H1 (cell line): ENCODE measurements at regions of chr3 and their contacts with region 1.

Region 1: DNA sequence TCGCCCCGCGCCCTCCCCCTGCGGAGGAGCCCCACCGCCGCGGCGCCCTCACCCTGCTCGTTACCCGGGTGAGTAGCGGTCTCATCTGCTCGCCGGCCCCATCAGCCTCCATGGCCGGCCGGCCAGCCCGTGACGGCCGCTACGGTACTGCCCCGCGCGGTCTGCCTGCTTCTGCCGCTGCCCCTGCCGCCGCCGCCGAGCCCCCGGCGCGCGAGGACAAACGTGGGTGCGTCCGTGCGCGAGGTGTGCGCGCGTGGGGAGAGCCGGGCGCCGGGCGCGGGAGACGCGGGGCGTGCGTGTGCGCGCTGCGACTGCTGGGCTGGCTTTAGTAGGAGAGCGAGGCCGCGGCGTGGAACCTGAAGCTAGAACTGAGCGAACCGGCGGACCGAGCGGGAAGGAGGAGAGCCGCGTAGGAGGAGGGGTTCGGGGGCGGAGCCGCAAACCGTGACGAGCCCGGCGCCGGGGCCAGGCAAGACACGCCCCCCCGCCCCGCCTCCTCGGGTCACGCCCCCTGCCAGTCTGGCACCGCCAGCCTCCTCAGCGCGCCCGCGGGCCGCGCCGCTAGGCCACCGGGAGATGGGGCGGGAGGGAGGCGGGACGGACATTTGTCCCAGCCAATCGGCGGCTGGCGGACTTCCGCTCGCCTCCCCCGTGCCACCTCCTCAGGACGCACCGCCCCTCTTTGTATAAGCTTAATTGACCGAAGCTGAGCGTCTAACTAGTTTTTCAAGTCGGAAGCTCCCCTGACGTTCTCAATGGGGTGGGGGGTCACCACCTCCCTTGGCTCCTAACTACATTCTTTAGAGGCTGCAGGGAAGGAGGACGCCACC is at the start of gene SLC4A7:
- DNase-seq: peak; percentile 91 to 99
- H3K4me3 ChIP-seq: peak within 1 kb of the TSS; percentile 79 to 91 (median 88)
- H3K27ac ChIP-seq: peak within 1 kb of the TSS; percentile 75
- H3K4me1 ChIP-seq: no peaks in the 10 kb centered on the region; a peak in 1 of 7 replicates
- H3K27me3 ChIP-seq: no peaks in the 10 kb centered on the region
- CTCF ChIP-seq: peak in 1 of 3 experiments; percentile 7; a peak in 1 of 4 replicates
- EP300 ChIP-seq: no peak
- POLR2A ChIP-seq: peak; percentile 72 to 94
- RAD21 ChIP-seq: no peak; a peak in 1 of 4 replicates
- total RNA-seq, gene SLC4A7: 66.6 and 70.5 TPM in 2 replicates

Region 2: GRCh38 chr3:27127195-27127594 is 357.0 kb before region 1 on chr3:
- CTCF ChIA-PET with region 1: no interaction called
- POLR2A ChIA-PET with region 1: no interaction called
- DNase-seq: no peak
- H3K4me3 ChIP-seq: no peak overlapping the region
- H3K27ac ChIP-seq: no peak overlapping the region
- H3K4me1 ChIP-seq: peaks cover 0 to 2% (median 0%) of the 10 kb centered on the region in 4 experiments; a peak in 1 of 7 replicates
- H3K27me3 ChIP-seq: no peaks in the 10 kb centered on the region
- CTCF ChIP-seq: no peak
- EP300 ChIP-seq: no peak
- POLR2A ChIP-seq: no peak
- RAD21 ChIP-seq: no peak

Region 3: GRCh38 chr3:27467545-27467944 is 16.7 kb before region 1 on chr3:
- CTCF ChIA-PET with region 1: interaction called, 8 read pairs
- POLR2A ChIA-PET with region 1: interaction called, 15 read pairs
- DNase-seq: no peak
- H3K4me3 ChIP-seq: no peak overlapping the region
- H3K27ac ChIP-seq: no peak overlapping the region
- H3K4me1 ChIP-seq: peaks cover 0 to 2% (median 0%) of the 10 kb centered on the region in 4 experiments; a peak in 2 of 7 replicates
- H3K27me3 ChIP-seq: no peaks in the 10 kb centered on the region
- CTCF ChIP-seq: no peak; a peak in 1 of 4 replicates
- EP300 ChIP-seq: no peak
- POLR2A ChIP-seq: no peak
- RAD21 ChIP-seq: peak; percentile 27 to 30; a peak in 3 of 4 replicates